H1 (cell line): ENCODE measurements at regions of chr7 and their contacts with region 1.

Region 1: GRCh38 chr7:35707422-35707821 is 12.5 kb upstream of the HERPUD2 start:
- DNase-seq: no peak
- H3K4me3 ChIP-seq: no peak overlapping the region
- H3K27ac ChIP-seq: no peak overlapping the region
- H3K4me1 ChIP-seq: no peaks in the 10 kb centered on the region
- H3K27me3 ChIP-seq: no peaks in the 10 kb centered on the region
- CTCF ChIP-seq: no peak
- EP300 ChIP-seq: no peak
- POLR2A ChIP-seq: no peak
- RAD21 ChIP-seq: no peak

Region 2: GRCh38 chr7:35694781-35695472 is 12.5 kb before region 1 on chr7 and contains the start of gene HERPUD2:
- CTCF ChIA-PET with region 1: interaction called, 23 read pairs
- POLR2A ChIA-PET with region 1: interaction called, 8 read pairs
- DNase-seq: peak; percentile 79 to 91
- H3K4me3 ChIP-seq: peak within 1 kb of the TSS; percentile 83 to 90 (median 87)
- H3K27ac ChIP-seq: peak within 1 kb of the TSS; percentile 93
- H3K4me1 ChIP-seq: peaks cover 2 to 6% (median 4%) of the 10 kb centered on the region in 4 experiments; a peak in 5 of 7 replicates
- H3K27me3 ChIP-seq: no peaks in the 10 kb centered on the region; a peak in 3 of 7 replicates
- CTCF ChIP-seq: no peak
- EP300 ChIP-seq: peak in 1 of 2 experiments; percentile 23; a peak in 1 of 3 replicates
- POLR2A ChIP-seq: peak; percentile 86 to 93
- RAD21 ChIP-seq: no peak; a peak in 1 of 4 replicates
- total RNA-seq, gene HERPUD2: 15.6 and 18.3 TPM in 2 replicates

Region 3: DNA sequence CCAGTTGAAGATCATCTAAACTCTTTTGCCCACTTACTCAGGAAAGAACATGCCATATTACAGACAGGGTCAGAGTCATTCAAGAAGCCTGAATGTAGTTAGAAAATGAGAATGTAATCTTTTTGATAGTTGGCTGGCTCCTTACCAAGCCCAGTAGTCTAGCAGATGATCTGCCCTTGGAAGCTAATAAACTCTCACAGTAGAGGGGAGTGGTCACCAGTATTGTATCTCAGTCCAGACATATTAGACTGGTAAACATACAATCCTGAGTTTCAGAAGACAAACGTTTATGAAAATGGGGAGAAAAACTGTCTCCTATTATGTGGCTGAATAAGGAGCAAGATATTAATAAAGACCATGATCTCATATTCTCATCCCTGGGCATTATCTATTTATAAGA is 158.8 kb after region 1 on chr7:
- CTCF ChIA-PET with region 1: no interaction called
- POLR2A ChIA-PET with region 1: no interaction called
- DNase-seq: no peak
- H3K4me3 ChIP-seq: no peak overlapping the region
- H3K27ac ChIP-seq: no peak overlapping the region
- H3K4me1 ChIP-seq: no peaks in the 10 kb centered on the region
- H3K27me3 ChIP-seq: no peaks in the 10 kb centered on the region
- CTCF ChIP-seq: no peak
- EP300 ChIP-seq: no peak
- POLR2A ChIP-seq: no peak
- RAD21 ChIP-seq: no peak

Region 4: GRCh38 chr7:35906191-35906908 is 198.9 kb after region 1 on chr7:
- CTCF ChIA-PET with region 1: interaction called, 44 read pairs
- POLR2A ChIA-PET with region 1: no interaction called
- DNase-seq: peak; percentile 31 to 75
- H3K4me3 ChIP-seq: no peak overlapping the region
- H3K27ac ChIP-seq: no peak overlapping the region
- H3K4me1 ChIP-seq: peaks cover 2 to 14% (median 8%) of the 10 kb centered on the region in 4 experiments; a peak in 6 of 7 replicates
- H3K27me3 ChIP-seq: no peaks in the 10 kb centered on the region
- CTCF ChIP-seq: peak in 2 of 3 experiments; percentile 78 to 84; a peak in 3 of 4 replicates
- EP300 ChIP-seq: no peak
- POLR2A ChIP-seq: no peak
- RAD21 ChIP-seq: peak; percentile 92 to 95